PC-9 (cell line): ENCODE measurements at regions of chr7 and their contacts with region 1.

Region 1: DNA sequence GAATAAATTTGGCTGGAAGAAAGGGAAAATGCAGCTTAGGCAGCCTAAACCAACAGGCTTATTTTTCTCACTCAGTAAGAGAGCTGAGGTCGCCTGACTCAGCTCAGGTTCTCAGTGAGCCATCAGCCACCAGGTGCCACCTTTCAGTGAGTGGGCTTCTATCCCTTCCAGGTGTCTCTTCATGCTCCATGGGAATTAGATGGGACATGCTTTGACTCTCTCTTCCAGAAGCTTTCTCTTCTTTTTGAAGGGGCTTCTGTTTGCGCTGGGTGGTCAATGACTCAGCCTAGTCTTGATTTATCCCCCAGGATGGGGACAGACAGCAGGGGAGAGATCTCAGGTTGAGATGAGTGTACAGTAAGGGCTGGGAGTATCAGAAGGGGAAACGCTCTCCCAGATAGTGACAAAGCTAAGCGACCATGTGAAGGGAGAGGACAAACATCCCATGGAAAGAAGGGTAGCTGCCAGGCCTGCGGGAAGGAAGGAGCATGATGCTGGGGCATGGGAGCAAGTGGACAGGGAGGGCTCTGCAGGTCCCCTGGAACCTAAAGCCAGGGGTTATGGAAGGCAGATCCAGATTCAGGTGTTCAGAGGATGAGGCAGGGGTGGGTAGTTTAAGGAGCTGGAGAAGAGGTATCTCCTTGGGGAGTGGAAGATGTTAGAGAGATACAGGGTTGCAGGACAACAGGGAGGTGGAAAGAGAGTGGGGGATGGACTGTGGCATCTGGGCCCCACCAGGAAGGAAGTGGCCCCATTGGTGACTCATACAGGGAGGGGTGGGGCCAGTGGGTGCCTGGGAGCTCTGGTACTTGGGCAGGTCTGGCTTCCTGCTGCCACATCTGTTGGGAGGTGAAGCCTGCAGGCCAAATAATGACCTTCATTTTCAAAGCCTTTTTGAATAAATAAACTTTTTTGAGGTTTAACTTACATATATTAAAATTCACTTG is 32.5 kb downstream of the OGDH start:
- DNase-seq: peak; percentile 90 to 93
- H3K4me3 ChIP-seq: peak overlapping the region; percentile 12; the same call in 1 of the 2 replicates
- H3K27ac ChIP-seq: peak overlapping the region; percentile 96
- H3K4me1 ChIP-seq: peaks cover 67% of the 10 kb centered on the region
- H3K27me3 ChIP-seq: no peaks in the 10 kb centered on the region
- CTCF ChIP-seq: no peak; the same call in 1 of the 2 replicates

Region 2: GRCh38 chr7:44498230-44498954 is 140.5 kb before region 1 on chr7:
- CTCF ChIA-PET with region 1: no interaction called
- POLR2A ChIA-PET with region 1: no interaction called
- intact Hi-C with region 1: no loop called
- DNase-seq: no peak
- H3K4me3 ChIP-seq: no peak overlapping the region
- H3K27ac ChIP-seq: no peak overlapping the region
- H3K4me1 ChIP-seq: no peaks in the 10 kb centered on the region
- H3K27me3 ChIP-seq: no peaks in the 10 kb centered on the region
- CTCF ChIP-seq: no peak

Region 3: DNA sequence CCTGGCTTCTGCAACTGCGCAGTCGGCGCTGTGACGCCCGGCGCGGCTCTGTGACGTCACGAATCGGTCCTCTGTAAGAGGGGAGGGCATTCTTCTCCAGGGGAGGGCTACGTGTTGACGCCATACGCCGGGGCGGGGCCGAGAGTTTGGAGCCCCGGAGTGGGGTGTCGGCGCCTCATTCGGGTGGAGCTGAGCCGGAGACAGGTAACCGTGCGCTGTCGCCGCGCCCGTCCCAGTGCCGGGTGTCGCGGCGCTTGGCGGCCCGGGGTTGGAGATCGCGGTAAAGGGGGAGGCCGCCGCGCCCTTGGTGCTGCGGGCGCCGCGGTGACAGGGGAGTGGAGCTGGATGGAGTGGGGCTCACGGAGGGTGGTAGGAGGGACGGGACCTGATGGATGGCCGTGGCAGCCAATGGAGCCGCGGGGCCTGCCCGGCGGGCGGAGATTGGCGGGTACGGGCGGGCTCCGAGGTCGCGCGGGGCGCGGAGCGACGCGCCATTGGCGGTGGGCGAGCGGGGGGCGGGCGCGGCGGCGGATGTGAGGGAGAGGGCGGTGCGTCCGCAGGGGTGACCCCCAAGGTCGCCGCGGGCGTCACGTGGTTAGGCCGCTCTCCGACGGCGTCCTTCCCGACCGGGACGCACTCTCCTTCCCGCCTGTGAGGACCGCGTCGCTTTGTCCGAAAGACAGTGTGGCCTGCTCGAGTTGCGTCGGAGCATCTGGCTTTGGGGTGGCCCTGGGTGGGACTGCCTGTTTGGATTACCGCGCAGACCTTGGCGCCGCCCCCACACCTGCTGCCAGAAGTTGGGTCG is 32.2 kb before region 1 on chr7 and contains the start of gene OGDH:
- CTCF ChIA-PET with region 1: no interaction called
- POLR2A ChIA-PET with region 1: interaction called, 6 read pairs
- intact Hi-C with region 1: loop called (anchors 1 kb)
- DNase-seq: peak; percentile 98 to 100
- H3K4me3 ChIP-seq: peak within 1 kb of the TSS; percentile 81
- H3K27ac ChIP-seq: peak within 1 kb of the TSS; percentile 73
- H3K4me1 ChIP-seq: peaks cover 60% of the 10 kb centered on the region
- H3K27me3 ChIP-seq: no peaks in the 10 kb centered on the region
- CTCF ChIP-seq: no peak
- total RNA-seq, gene OGDH: 93.6 and 135 TPM in 2 replicates

Region 4: GRCh38 chr7:44618743-44619142 is 20.1 kb before region 1 on chr7:
- CTCF ChIA-PET with region 1: interaction called, 3 read pairs
- POLR2A ChIA-PET with region 1: interaction called, 7 read pairs
- intact Hi-C with region 1: loop called (anchors 1 kb)
- DNase-seq: peak; percentile 93 to 99
- H3K4me3 ChIP-seq: peak overlapping the region; percentile 52; the same call in 1 of the 2 replicates
- H3K27ac ChIP-seq: peak overlapping the region; percentile 87
- H3K4me1 ChIP-seq: peaks cover 86% of the 10 kb centered on the region
- H3K27me3 ChIP-seq: no peaks in the 10 kb centered on the region
- CTCF ChIP-seq: no peak

Region 5: GRCh38 chr7:44712012-44712411 is 73.1 kb after region 1 on chr7:
- CTCF ChIA-PET with region 1: no interaction called
- POLR2A ChIA-PET with region 1: interaction called, 3 read pairs
- intact Hi-C with region 1: loop called (anchors 2 kb)
- DNase-seq: peak; percentile 87 to 97
- H3K4me3 ChIP-seq: no peak overlapping the region
- H3K27ac ChIP-seq: peak overlapping the region; percentile 69
- H3K4me1 ChIP-seq: peaks cover 52% of the 10 kb centered on the region
- H3K27me3 ChIP-seq: no peaks in the 10 kb centered on the region
- CTCF ChIP-seq: no peak

Region 6: GRCh38 chr7:44735403-44736165 is 96.7 kb after region 1 on chr7:
- CTCF ChIA-PET with region 1: no interaction called
- POLR2A ChIA-PET with region 1: interaction called, 10 read pairs
- intact Hi-C with region 1: no loop called
- DNase-seq: peak; percentile 58 to 99
- H3K4me3 ChIP-seq: peak overlapping the region; percentile 22; the same call in 1 of the 2 replicates
- H3K27ac ChIP-seq: peak overlapping the region; percentile 94
- H3K4me1 ChIP-seq: peaks cover 55% of the 10 kb centered on the region
- H3K27me3 ChIP-seq: no peaks in the 10 kb centered on the region
- CTCF ChIP-seq: no peak

Region 7: DNA sequence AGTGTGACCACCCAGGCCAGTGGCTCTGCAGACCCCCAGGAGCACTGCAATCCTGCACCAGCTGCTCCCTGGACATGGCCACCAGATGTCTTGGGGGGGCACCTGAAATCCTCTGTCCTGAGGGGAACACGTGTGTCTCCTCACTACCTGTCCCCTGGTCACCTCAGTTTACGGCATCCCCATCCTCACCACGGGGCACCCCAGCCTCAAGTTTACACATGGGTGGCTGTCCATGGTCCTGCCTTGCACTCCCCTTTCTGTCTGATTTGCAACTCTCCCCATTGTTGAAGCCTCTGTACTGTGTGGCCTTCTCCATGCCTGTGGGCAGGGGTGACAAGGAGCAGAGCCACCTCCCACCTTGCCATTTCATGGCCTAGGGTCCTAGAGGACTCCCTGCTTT is 585.9 kb after region 1 on chr7:
- CTCF ChIA-PET with region 1: no interaction called
- POLR2A ChIA-PET with region 1: no interaction called
- intact Hi-C with region 1: no loop called
- DNase-seq: no peak
- H3K4me3 ChIP-seq: no peak overlapping the region
- H3K27ac ChIP-seq: no peak overlapping the region
- H3K4me1 ChIP-seq: no peaks in the 10 kb centered on the region
- H3K27me3 ChIP-seq: peaks cover 99% of the 10 kb centered on the region
- CTCF ChIP-seq: no peak